Colonic mucosa (tissue), 4 donors: ENCODE measurements at regions of chr10 and their contacts with region 1.

Region 1: GRCh38 chr10:19412531-19412930 is 363.9 kb downstream of the MALRD1 start:
- DNase-seq: no peak
- H3K4me3 ChIP-seq: no peak overlapping the region
- H3K27ac ChIP-seq: no peak overlapping the region
- H3K4me1 ChIP-seq: no peaks in the 10 kb centered on the region
- H3K27me3 ChIP-seq: no peaks in the 10 kb centered on the region
- CTCF ChIP-seq: peak; percentile 44

Region 2: GRCh38 chr10:19347621-19348020 is 64.9 kb before region 1 on chr10:
- intact Hi-C with region 1: no loop called
- DNase-seq: no peak
- H3K4me3 ChIP-seq: no peak overlapping the region
- H3K27ac ChIP-seq: no peak overlapping the region
- H3K4me1 ChIP-seq: no peaks in the 10 kb centered on the region
- H3K27me3 ChIP-seq: no peaks in the 10 kb centered on the region
- CTCF ChIP-seq: no peak

Region 3: GRCh38 chr10:19788075-19788686 is 375.6 kb after region 1 on chr10:
- intact Hi-C with region 1: loop called (anchors 5 kb)
- DNase-seq: peak; percentile 34
- H3K4me3 ChIP-seq: no peak overlapping the region
- H3K27ac ChIP-seq: no peak overlapping the region
- H3K4me1 ChIP-seq: no peaks in the 10 kb centered on the region
- H3K27me3 ChIP-seq: no peaks in the 10 kb centered on the region
- CTCF ChIP-seq: peak; percentile 71

Region 4: DNA sequence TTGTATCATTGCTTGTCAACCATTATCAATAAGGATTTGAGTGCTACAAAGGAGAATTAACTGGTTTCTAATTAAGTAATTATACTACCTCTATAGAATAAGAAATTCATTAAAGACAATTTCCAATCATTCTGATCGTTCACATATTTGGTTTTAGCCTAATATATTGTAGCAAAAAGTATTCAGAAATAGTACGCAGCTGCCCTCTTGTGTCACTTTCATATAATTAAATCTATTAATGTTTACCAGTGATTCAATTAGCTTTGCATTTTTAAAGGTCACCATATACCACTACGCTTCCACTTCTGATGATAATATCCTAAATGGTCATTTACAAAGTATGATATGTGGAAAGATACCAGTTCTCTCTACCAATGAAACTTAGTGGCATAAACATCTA is 1356.3 kb after region 1 on chr10:
- intact Hi-C with region 1: loop called (anchors 5 kb)
- DNase-seq: no peak
- H3K4me3 ChIP-seq: no peak overlapping the region
- H3K27ac ChIP-seq: no peak overlapping the region
- H3K4me1 ChIP-seq: no peaks in the 10 kb centered on the region
- H3K27me3 ChIP-seq: no peaks in the 10 kb centered on the region
- CTCF ChIP-seq: peak; percentile 28